Activated CD8-positive, alpha-beta T cell treated with anti-CD3 and anti-CD28 coated beads for 36 hours (primary cell): ENCODE measurements at regions of chr10 and their contacts with region 1.

Region 1: GRCh38 chr10:117174439-117175214 is 22.7 kb upstream of the KCNK18 start:
- DNase-seq: peak; percentile 93
- ATAC-seq: peak; percentile 86
- H3K4me3 Mint-ChIP-seq: peak overlapping the region; percentile 66
- H3K27ac Mint-ChIP-seq: no peak overlapping the region
- H3K4me1 Mint-ChIP-seq: peaks cover 17% of the 10 kb centered on the region
- H3K27me3 Mint-ChIP-seq: peaks cover 28% of the 10 kb centered on the region
- CTCF ChIP-seq: peak; percentile 77

Region 2: DNA sequence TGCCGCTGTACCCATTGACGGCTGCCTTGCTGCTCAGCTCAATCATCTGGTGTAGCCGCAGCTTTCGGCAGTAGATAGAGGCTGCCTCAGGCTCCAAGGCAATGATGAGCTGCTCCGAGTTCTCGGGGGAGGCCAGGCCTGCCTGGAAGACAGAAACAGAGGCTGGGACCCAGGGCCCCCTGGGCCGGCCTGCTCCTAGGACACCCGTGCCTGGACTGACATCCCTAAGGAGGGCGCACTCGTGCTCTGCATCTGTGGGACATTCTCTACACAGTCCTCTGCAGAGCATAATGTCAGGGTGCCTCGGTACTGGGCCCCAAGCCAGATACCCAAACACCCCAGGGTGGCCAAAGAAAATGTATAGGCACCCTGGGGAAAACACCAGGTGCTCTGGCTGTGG is 490.8 kb before region 1 on chr10:
- CTCF ChIA-PET with region 1: interaction called, 15 read pairs
- POLR2A ChIA-PET with region 1: no interaction called
- intact Hi-C with region 1: loop called (anchors 5 kb)
- DNase-seq: no peak
- ATAC-seq: no peak
- H3K4me3 Mint-ChIP-seq: no peak overlapping the region
- H3K27ac Mint-ChIP-seq: no peak overlapping the region
- H3K4me1 Mint-ChIP-seq: no peaks in the 10 kb centered on the region
- H3K27me3 Mint-ChIP-seq: peaks cover 15% of the 10 kb centered on the region
- CTCF ChIP-seq: no peak

Region 3: GRCh38 chr10:116787893-116788665 is 386.5 kb before region 1 on chr10:
- CTCF ChIA-PET with region 1: interaction called, 61 read pairs
- POLR2A ChIA-PET with region 1: no interaction called
- intact Hi-C with region 1: no loop called
- DNase-seq: peak; percentile 91
- ATAC-seq: peak; percentile 93
- H3K4me3 Mint-ChIP-seq: peak overlapping the region; percentile 42
- H3K27ac Mint-ChIP-seq: peak overlapping the region; percentile 72
- H3K4me1 Mint-ChIP-seq: peaks cover 12% of the 10 kb centered on the region
- H3K27me3 Mint-ChIP-seq: peaks cover 10% of the 10 kb centered on the region
- CTCF ChIP-seq: peak; percentile 98

Region 4: GRCh38 chr10:116796910-116797513 is 377.6 kb before region 1 on chr10:
- CTCF ChIA-PET with region 1: interaction called, 111 read pairs
- POLR2A ChIA-PET with region 1: no interaction called
- intact Hi-C with region 1: loop called (anchors 1 kb)
- DNase-seq: peak; percentile 78
- ATAC-seq: peak; percentile 90
- H3K4me3 Mint-ChIP-seq: no peak overlapping the region
- H3K27ac Mint-ChIP-seq: no peak overlapping the region
- H3K4me1 Mint-ChIP-seq: peaks cover 5% of the 10 kb centered on the region
- H3K27me3 Mint-ChIP-seq: peaks cover 23% of the 10 kb centered on the region
- CTCF ChIP-seq: peak; percentile 78

Region 5: GRCh38 chr10:116808706-116809235 is 365.9 kb before region 1 on chr10:
- CTCF ChIA-PET with region 1: interaction called, 39 read pairs
- POLR2A ChIA-PET with region 1: no interaction called
- intact Hi-C with region 1: no loop called
- DNase-seq: no peak
- ATAC-seq: no peak
- H3K4me3 Mint-ChIP-seq: no peak overlapping the region
- H3K27ac Mint-ChIP-seq: no peak overlapping the region
- H3K4me1 Mint-ChIP-seq: no peaks in the 10 kb centered on the region
- H3K27me3 Mint-ChIP-seq: peaks cover 6% of the 10 kb centered on the region
- CTCF ChIP-seq: no peak

Region 6: GRCh38 chr10:117137031-117137910 is 37.4 kb before region 1 on chr10:
- CTCF ChIA-PET with region 1: interaction called, 22 read pairs
- POLR2A ChIA-PET with region 1: no interaction called
- intact Hi-C with region 1: no loop called
- DNase-seq: peak; percentile 14
- ATAC-seq: peak; percentile 17
- H3K4me3 Mint-ChIP-seq: no peak overlapping the region
- H3K27ac Mint-ChIP-seq: no peak overlapping the region
- H3K4me1 Mint-ChIP-seq: peaks cover 16% of the 10 kb centered on the region
- H3K27me3 Mint-ChIP-seq: peaks cover 66% of the 10 kb centered on the region
- CTCF ChIP-seq: no peak

Region 7: GRCh38 chr10:117186832-117187615 is 12.4 kb after region 1 on chr10:
- CTCF ChIA-PET with region 1: interaction called, 19 read pairs
- POLR2A ChIA-PET with region 1: no interaction called
- intact Hi-C with region 1: no loop called
- DNase-seq: no peak
- ATAC-seq: peak; percentile 13
- H3K4me3 Mint-ChIP-seq: no peak overlapping the region
- H3K27ac Mint-ChIP-seq: no peak overlapping the region
- H3K4me1 Mint-ChIP-seq: no peaks in the 10 kb centered on the region
- H3K27me3 Mint-ChIP-seq: peaks cover 5% of the 10 kb centered on the region
- CTCF ChIP-seq: no peak